Common myeloid progenitor, CD34-positive (primary cell): ENCODE measurements at regions of chr16 and their contacts with region 1.

Region 1: GRCh38 chr16:66588981-66589713 is 9.9 kb downstream of the CMTM2 start:
- DNase-seq: peak; percentile 88 to 92 (median 90)
- H3K4me3 ChIP-seq: no peak overlapping the region
- H3K27ac ChIP-seq: no peak overlapping the region
- H3K4me1 ChIP-seq: peaks cover 6 to 65% (median 54%) of the 10 kb centered on the region in 4 experiments
- H3K27me3 ChIP-seq: no peaks in the 10 kb centered on the region

Region 2: DNA sequence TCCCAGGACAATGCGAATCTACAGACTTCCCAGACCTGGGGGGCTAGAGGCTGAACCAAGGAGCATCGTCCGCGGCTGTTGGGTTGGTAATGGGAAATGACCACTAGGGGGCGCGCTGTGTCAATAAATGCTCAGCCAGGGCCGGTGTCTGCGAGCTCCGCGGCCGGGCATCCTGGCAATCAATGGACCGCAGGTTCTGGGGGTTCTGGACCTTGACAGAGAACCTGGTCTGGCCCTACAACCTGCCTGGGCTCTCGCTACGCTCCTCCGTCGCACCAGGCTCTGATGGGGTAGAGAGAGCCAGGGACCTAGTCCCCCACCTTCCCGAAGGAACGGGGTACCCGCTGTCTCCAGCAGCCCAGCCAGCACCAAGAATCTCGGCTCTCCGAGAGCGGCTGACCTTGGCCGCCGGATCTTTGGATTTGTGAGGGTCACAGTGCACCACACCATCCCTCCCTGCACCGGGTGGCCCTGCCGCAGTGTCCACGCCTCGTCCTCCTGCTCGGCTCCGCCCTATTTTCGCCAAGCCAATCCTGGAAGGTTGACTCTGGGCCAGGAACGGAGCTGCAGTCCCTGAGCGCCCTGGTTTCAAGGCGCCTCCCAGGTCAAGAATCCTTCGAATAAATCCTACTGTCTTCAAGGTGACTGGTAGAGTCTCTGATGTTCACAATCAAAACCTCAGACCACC is 182.5 kb before region 1 on chr16:
- CTCF ChIA-PET with region 1: interaction called, 39 read pairs
- POLR2A ChIA-PET with region 1: no interaction called
- DNase-seq: peak; percentile 61 to 74 (median 72)
- H3K4me3 ChIP-seq: peak overlapping the region; percentile 1 to 78 (median 69)
- H3K27ac ChIP-seq: no peak overlapping the region
- H3K4me1 ChIP-seq: peaks cover 0 to 15% (median 12%) of the 10 kb centered on the region in 4 experiments
- H3K27me3 ChIP-seq: peaks cover 0 to 13% (median 4%) of the 10 kb centered on the region in 5 experiments

Region 3: GRCh38 chr16:66490774-66491715 is 98.1 kb before region 1 on chr16:
- CTCF ChIA-PET with region 1: interaction called, 16 read pairs
- POLR2A ChIA-PET with region 1: no interaction called
- DNase-seq: peak; percentile 48 to 85 (median 76)
- H3K4me3 ChIP-seq: no peak overlapping the region
- H3K27ac ChIP-seq: no peak overlapping the region
- H3K4me1 ChIP-seq: peaks cover 0 to 26% (median 23%) of the 10 kb centered on the region in 4 experiments
- H3K27me3 ChIP-seq: peaks cover 0 to 2% (median 0%) of the 10 kb centered on the region in 5 experiments

Region 4: DNA sequence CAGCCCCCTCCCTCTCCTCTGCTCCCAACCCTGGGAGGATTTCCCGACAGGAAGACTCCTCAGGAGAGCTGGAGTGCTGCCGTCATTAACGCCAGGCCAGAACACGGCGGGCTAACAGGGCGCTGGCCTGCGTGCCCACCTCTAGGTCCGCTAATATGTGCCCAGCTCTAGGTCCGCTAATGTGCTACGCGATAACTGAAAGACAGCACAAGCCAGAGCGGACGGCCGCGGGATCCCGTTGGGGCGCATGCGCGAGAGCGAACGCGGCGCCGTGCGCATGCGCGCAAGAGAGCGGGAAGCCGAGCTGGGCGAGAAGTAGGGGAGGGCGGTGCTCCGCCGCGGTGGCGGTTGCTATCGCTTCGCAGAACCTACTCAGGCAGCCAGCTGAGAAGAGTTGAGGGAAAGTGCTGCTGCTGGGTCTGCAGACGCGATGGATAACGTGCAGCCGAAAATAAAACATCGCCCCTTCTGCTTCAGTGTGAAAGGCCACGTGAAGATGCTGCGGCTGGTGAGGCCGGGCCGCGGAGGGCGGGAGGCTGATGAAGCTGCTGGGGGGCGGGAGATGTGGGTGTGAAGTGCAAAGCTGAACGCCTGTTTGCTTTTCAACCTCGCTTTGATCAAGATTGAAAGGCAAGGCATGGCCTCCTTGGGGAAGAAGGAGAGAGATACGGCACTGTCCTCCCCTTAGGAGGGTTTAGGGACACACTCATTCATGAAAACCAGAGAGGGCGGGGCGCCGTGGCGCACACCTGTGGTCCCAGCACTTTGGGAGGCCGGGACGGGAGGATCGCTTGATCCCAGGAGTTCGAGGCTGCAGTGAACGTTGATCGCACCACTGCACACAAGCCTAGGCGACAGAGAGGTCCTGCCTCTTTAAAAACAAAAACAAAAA is 36.6 kb before region 1 on chr16 and contains the start of gene CKLF:
- CTCF ChIA-PET with region 1: interaction called, 22 read pairs
- POLR2A ChIA-PET with region 1: interaction called, 4 read pairs
- DNase-seq: peak; percentile 87 to 94 (median 93)
- H3K4me3 ChIP-seq: peak within 1 kb of the TSS; percentile 35 to 85 (median 71)
- H3K27ac ChIP-seq: peak within 1 kb of the TSS; percentile 36 to 88
- H3K4me1 ChIP-seq: peaks cover 26 to 72% (median 61%) of the 10 kb centered on the region in 4 experiments
- H3K27me3 ChIP-seq: no peaks in the 10 kb centered on the region

Region 5: DNA sequence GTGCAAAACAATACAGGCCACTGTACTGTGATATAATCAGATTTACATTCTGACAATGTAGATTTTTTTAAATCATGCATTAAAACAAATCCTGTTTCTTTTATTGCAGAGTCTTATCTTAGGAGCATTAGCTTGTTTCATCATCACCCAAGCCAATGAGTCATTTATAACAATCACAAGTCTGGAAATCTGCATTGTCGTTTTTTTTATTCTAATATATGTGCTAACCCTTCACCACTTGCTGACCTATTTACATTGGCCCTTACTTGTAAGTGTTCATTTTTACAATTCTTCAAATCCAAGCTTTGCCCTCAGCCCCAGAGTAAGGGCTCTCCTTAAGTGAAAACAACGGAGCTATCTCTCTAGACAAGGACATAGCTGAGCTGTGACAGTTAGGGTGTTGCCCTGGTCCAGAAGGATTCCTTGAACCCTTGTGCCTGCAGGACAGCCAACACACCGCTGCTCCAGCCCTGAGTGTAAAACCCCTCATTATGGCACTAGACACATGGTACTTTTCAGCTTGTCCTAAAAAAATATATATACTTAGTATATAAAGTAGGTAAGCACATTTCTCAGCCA is 19.2 kb before region 1 on chr16:
- CTCF ChIA-PET with region 1: interaction called, 16 read pairs
- POLR2A ChIA-PET with region 1: no interaction called
- DNase-seq: no peak
- H3K4me3 ChIP-seq: no peak overlapping the region
- H3K27ac ChIP-seq: no peak overlapping the region
- H3K4me1 ChIP-seq: peaks cover 9 to 43% (median 25%) of the 10 kb centered on the region in 4 experiments
- H3K27me3 ChIP-seq: no peaks in the 10 kb centered on the region

Region 6: GRCh38 chr16:66619534-66620458 is 30.6 kb after region 1 on chr16:
- CTCF ChIA-PET with region 1: no interaction called
- POLR2A ChIA-PET with region 1: no interaction called
- DNase-seq: no peak
- H3K4me3 ChIP-seq: no peak overlapping the region
- H3K27ac ChIP-seq: no peak overlapping the region
- H3K4me1 ChIP-seq: no peaks in the 10 kb centered on the region
- H3K27me3 ChIP-seq: no peaks in the 10 kb centered on the region

Region 7: DNA sequence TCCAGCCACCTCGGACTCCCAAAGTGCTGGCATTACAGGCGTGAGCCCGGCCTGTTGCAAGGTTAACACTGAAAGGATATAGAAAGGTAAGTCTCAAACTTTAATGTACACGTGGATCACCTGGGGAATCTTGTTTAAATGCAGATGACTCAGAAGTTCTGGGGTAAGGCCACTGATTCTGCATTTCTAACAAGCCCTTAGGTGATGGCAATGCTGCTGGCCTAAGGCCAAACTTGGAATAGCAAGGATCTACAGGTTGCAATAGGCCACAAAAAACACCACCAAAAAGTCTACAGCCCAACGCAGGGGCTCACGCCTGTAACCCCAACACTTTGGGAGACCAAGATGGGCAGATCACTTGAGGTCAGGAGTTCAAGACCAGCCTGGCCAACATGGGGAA is 103.2 kb after region 1 on chr16:
- CTCF ChIA-PET with region 1: no interaction called
- POLR2A ChIA-PET with region 1: no interaction called
- DNase-seq: no peak
- H3K4me3 ChIP-seq: no peak overlapping the region
- H3K27ac ChIP-seq: no peak overlapping the region
- H3K4me1 ChIP-seq: peaks cover 5 to 22% (median 20%) of the 10 kb centered on the region in 4 experiments
- H3K27me3 ChIP-seq: no peaks in the 10 kb centered on the region